Dendritic cell treated with granulocyte-macrophage colony-stimulating factor and Interleukin-4, amounts not matched to agents 40 ng/mL and 50 ng/mL, for 4 days (primary cell): ENCODE measurements at regions of chr6 and their contacts with region 1.

Region 1: DNA sequence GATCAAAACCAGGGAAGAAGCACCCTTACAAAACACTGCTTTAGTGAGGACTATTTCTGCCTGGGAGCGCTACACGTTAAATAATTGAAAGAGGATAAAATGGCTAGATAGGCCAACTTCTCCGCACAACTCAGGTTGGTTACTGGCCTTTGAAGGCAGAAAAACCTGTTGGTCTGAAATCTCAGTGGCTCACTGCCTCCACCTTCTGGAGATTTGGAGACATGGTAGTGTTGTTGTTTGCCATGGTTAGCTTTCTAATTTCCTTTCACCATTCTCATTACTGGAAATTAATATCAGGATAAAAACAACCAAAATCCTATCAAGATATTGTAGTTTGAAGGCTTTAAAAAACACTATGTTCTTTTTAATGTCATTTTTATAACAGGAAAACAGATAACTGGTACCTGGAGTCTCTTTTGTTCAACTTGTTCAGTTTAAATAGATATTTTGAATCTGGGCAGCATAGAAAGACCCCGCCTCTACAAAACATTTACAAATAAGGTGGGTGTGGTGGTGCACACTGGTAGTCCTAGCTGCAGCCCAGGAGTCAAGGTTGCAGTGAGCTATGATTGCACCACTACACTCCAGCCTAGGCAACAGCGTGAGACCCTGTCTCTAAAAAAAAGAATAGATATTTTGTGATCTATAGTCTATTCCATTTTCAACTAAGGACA is 27.5 kb upstream of the BCLAF1 start:
- H3K4me3 Mint-ChIP-seq: no peak overlapping the region
- H3K27ac Mint-ChIP-seq: no peak overlapping the region
- H3K4me1 Mint-ChIP-seq: peaks cover 5% of the 10 kb centered on the region
- H3K27me3 Mint-ChIP-seq: peaks cover 2% of the 10 kb centered on the region

Region 2: DNA sequence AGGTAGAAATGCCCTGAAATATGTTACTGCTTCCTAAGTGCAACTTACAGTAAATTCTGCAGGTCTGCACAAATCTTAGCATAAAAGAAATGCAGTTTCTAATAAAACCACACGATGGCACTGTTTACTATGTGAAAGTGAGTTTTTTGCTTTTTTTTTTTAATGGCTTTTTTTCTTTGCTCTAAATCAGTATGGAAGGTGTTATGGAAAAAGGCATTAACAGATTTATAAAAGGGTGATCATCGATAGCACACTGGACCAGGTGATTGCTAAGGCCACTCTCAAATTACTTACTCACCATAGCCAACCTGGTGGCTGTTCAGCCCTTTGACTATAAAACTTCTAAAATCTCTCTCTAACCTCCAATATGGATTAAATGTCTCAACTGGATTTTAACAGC is 865.5 kb before region 1 on chr6:
- intact Hi-C with region 1: loop called (anchors 2 kb)
- H3K4me3 Mint-ChIP-seq: no peak overlapping the region
- H3K27ac Mint-ChIP-seq: no peak overlapping the region
- H3K4me1 Mint-ChIP-seq: no peaks in the 10 kb centered on the region
- H3K27me3 Mint-ChIP-seq: no peaks in the 10 kb centered on the region

Region 3: DNA sequence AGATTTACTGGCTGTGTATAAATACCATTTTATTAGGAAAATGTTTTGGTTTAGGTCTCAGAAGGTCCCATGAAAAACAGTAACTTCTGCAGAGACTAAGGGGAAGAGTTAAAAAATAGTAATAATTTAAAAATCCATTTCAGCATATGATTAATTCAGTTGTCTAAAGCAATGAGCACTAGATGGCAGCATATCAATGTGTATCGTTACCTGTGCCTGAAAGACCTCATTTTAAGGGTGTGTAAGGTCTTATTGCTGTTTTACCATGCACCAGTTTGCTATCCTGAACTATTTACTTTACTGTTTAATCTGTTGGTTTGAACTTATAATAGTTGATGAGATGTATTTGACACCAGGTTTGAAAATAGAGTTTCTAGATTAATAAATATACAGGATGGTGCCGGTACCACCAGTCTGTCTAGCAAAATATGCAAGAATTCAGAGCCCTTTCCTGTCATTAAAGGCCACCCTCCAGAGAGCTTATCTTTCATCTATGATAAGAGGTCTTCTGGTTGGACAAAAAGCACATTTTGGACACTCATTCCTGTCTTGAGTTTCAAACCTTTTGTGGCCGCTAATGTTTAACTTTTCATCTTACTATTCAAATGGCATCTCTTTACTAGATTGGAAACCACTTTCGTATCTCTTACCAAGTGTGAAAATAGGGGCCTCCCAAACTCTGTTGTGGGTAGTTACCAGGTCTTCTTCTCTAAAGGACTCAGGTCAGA is 810.7 kb before region 1 on chr6:
- intact Hi-C with region 1: loop called (anchors 10 kb)
- H3K4me3 Mint-ChIP-seq: no peak overlapping the region
- H3K27ac Mint-ChIP-seq: no peak overlapping the region
- H3K4me1 Mint-ChIP-seq: no peaks in the 10 kb centered on the region
- H3K27me3 Mint-ChIP-seq: no peaks in the 10 kb centered on the region

Region 4: DNA sequence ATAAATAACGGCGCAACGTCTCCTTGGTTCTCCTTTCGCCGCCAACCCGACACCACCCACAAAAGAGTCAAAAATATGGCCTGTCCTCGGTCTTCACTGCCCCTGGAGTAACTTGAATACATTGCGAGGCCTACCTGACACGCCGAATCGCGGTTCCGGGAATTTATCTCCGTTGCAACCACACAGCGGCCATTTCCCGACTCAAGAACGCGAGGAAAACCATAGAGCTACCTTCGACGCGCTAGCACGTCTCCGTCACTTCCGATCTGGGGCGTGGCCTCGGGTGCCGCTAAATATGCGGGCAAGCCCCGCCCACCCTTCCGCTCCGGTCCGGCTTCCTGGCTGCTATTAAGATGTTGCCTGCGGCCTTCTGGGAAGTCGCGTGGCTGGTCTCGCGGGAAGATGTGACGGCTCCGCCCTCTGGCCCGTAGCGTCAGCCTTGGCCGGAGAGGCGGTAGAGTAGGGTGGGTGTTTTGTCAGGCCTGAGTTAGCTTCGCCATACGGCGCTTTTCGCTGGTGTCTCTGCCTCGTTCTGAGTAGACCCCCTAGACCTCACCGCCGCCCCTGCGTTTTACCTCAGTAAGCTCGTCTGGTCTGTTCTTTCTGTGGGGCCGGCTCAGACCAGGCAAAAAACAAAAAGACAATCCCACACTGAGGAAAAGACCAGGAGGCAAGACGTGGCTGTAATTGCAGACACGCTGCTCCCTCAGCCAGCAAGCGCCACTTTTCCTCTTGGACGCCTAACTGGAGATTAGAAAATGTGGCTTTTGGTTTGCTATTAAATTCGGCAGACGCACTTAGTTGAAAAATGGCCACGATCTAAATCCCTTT is 27.4 kb before region 1 on chr6 and contains the start of gene BCLAF1:
- intact Hi-C with region 1: loop called (anchors 5 kb)
- H3K4me3 Mint-ChIP-seq: peak within 1 kb of the TSS; percentile 99
- H3K27ac Mint-ChIP-seq: peak within 1 kb of the TSS; percentile 100
- H3K4me1 Mint-ChIP-seq: peaks cover 34% of the 10 kb centered on the region
- H3K27me3 Mint-ChIP-seq: no peaks in the 10 kb centered on the region

Region 5: GRCh38 chr6:136387316-136387715 is 70.2 kb after region 1 on chr6:
- intact Hi-C with region 1: no loop called
- H3K4me3 Mint-ChIP-seq: no peak overlapping the region
- H3K27ac Mint-ChIP-seq: no peak overlapping the region
- H3K4me1 Mint-ChIP-seq: no peaks in the 10 kb centered on the region
- H3K27me3 Mint-ChIP-seq: no peaks in the 10 kb centered on the region